Stomach (tissue), 19 donors: ENCODE measurements at regions of chr10 and their contacts with region 1.

Region 1: DNA sequence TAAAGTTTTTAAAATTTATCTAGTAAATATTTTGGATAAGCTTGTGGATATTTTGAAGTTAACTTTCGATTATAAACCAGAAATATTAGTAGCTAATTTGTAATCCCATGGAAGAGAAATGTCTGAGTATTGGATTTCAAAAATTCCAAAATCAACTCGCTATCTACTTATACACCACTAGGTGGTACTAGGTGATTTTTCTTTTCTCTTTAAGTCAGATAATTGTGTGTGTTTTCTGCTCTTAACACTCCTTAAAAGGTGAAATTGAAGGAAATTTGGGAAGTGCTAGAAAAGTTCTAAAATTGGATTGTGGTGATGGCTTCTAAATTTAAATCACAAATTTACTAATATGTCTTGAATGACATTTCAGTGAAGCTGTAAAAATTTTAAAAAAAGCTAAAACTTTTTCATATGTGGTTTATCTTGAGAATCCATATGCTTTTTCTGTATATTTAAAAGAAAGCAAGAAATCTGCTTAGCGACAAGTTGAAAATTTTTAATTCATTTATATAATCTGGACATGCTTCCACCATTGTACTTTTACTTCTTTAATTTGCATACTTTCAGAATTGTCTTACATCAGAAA is 90.2 kb downstream of the IPMK start:
- DNase-seq: peak in 1 of 2 donors; percentile 29
- H3K4me3 ChIP-seq: no peak overlapping the region
- H3K27ac ChIP-seq: no peak overlapping the region
- H3K4me1 ChIP-seq: peaks cover 0 to 11% (median 5%) of the 10 kb centered on the region in 4 donors
- H3K27me3 ChIP-seq: no peaks in the 10 kb centered on the region
- CTCF ChIP-seq: peak in 5 of 7 experiments; percentile 21 to 70 (median 45)
- EP300 ChIP-seq: no peak
- POLR2A ChIP-seq: no peak

Region 2: DNA sequence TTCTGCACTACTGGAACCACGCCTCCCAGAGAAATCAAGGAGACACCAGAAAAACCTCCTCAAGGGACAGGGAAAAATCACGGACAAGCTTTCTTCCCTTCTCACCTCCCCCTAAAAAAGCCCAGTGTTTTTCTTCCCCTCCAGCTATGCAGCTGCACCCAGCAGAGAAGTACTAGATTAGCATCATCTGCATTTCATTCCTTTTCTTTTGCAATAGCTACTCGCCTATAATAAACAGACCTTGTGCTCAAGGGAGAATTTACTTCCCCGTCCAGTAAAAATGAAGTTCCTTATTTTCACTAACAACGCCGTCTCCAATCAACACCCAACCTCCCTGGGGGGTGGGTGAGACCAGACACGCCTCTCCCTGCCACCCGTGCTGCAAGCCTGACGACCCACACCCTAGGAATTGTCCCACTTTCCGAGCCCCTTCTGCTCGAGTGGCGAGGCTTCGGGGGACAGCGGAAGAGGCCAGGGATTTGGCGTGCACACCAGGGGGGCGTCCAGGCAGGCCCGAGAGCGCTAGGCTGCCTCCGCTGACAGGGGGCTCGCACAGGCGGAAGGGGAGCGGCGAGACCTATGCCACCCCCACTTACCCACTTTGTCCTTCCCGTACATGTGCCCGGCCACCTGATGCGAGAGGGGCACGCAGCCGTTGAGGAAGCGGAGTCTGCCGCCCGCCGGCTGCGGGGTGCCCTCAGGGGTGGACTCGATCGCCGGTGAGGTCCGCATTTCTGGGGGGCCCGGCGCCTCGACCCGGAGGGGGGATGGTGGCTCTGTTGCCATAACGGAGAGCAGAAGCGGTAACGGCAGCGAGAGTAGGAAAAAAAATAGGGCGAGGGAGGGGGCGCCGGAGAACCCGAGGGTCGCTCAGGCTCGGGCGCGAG is 89.6 kb after region 1 on chr10:
- intact Hi-C with region 1: no loop called
- DNase-seq: peak; percentile 42 to 86
- H3K4me3 ChIP-seq: peak overlapping the region; percentile 75 to 89 (median 83)
- H3K27ac ChIP-seq: peak overlapping the region; percentile 88 to 100 (median 98)
- H3K4me1 ChIP-seq: peaks cover 6 to 39% (median 28%) of the 10 kb centered on the region in 4 donors
- H3K27me3 ChIP-seq: no peaks in the 10 kb centered on the region
- CTCF ChIP-seq: no peak
- EP300 ChIP-seq: no peak
- POLR2A ChIP-seq: no peak

Region 3: DNA sequence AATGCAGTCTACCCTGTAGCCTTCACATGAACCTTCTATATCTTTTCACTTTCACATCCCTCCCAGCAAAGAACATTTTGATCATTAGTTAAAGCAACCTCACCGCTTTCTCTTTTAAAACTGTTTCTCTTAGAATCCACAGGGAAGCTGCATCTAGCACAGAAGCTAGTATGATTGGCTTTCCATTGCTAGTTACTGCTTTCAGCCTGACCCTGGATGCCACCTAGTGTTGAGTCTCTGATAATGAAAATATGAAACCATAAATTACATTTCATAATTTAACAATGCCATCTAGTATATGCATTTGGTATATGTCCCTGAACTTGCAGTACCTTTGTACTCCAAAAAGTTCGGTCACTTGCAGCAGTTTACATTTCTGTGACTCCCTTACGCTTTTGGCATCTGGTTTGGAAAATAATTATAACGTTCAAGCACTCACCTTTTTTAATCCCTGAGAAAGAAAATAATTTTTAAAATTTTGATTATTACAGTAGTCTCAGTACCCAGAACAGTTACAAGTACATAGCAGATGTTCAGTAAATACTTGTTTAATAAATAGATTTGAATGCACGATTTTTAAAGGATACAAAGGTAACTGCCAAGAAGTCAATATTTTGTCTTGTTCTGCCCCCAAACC is 114.2 kb after region 1 on chr10:
- intact Hi-C with region 1: loop called (anchors 5 kb)
- DNase-seq: peak in 1 of 2 donors; percentile 82
- H3K4me3 ChIP-seq: no peak overlapping the region
- H3K27ac ChIP-seq: no peak overlapping the region
- H3K4me1 ChIP-seq: peaks cover 0 to 9% (median 0%) of the 10 kb centered on the region in 4 donors
- H3K27me3 ChIP-seq: no peaks in the 10 kb centered on the region
- CTCF ChIP-seq: peak in 5 of 7 experiments; percentile 42 to 76 (median 70)
- EP300 ChIP-seq: no peak
- POLR2A ChIP-seq: no peak